ENCODE measurements at regions of chr1 and their contacts with region 1.

Region 1: DNA sequence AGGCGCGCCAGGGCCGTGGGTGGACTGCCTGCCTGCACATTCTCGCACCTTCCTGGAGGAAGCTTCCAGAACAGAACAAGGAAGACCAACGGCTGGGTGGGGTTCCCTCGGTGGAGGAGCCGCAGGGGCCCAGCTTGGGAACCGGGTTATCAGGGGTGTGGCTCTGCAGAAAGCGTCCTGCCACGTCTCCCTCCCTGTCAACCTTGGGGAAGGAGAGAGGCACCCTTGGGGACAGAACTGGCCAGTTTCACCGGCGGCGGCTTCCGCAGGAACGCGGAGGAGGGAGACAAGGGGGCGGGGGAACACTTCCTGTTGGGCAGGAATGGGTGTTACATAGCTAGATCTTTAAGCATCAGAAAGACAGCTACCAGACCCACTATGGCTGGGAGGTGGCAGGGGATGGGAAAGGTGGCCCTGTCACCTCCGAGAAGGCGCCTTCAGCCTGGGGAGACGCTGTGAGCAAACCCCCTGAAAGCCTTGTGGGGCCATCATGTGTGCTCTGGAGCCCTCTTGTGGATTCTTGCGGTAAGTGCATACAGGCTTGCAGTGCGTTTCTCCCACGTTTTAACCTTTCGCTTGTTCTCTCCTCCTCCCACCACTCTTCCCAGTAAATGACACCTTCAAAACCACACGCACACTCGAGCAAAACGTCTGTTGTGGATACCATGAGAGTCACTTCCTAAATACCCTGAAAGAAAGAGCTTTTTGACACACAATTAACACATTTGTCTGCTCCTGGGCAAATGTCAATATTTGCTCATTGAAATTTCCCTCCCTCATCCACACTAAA is 3.8 kb upstream of the PLEKHA6 start:
- DNase-seq: peak; percentile 84 to 88 (median 87)
- ATAC-seq: peak; percentile 88
- H3K4me3 ChIP-seq: peak overlapping the region; percentile 30
- H3K27ac ChIP-seq: peak overlapping the region; percentile 31; the same call in 2 of the 3 replicates
- H3K4me1 ChIP-seq: peaks cover 24 to 34% of the 10 kb centered on the region in 2 experiments
- H3K27me3 ChIP-seq: peaks cover 14 to 44% of the 10 kb centered on the region in 2 experiments
- CTCF ChIP-seq: peak; percentile 96 to 100 (median 98)
- EP300 ChIP-seq: peak; percentile 22; the same call in 1 of the 2 replicates
- POLR2A ChIP-seq: no peak
- RAD21 ChIP-seq: peak; percentile 100

Region 2: DNA sequence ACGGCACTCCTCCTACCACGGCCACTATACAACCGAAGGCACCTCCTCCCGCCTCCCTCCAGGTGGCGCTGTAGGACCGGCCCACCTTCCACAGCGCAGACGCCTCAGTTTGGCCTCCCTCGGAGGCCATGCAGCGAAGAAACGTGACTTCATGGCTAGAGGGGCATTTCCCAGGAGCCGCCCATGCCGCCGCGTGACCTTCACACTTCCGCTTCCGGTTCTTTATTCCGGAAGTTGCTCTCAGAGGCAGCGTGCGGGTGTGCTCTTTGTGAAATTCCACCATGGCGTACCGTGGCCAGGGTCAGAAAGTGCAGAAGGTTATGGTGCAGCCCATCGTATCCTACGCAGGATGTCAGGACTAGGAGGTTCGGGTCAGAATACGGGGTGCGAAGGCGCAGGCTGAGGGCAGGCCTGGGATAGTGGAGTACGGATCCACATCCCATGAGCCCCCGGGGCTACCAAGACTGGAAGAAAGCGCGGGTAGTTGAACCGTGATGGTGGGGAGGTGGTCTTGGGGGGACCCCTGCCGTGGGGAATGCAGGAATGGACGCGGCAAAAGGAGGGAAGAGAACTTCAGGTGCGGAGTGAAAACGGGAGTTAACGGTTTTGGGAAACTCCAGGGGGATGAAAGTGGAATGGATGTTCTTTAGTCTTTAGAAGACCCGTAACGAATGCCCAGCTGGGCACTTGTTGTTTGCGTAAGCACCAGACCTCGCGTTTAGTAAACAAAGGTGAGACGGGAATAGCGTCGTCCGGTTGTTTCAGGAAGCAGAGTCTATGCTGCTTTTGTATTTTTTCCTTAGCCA is 501.9 kb before region 1 on chr1 and contains the start of gene SNRPE:
- CTCF ChIA-PET with region 1: interaction called, 3 read pairs
- POLR2A ChIA-PET with region 1: no interaction called
- in situ Hi-C with region 1: loop called (anchors 10 kb)
- intact Hi-C with region 1: loop called (anchors 5 kb)
- DNase-seq: peak; percentile 96 to 100 (median 97)
- ATAC-seq: peak; percentile 97
- H3K4me3 ChIP-seq: peak within 1 kb of the TSS; percentile 92
- H3K27ac ChIP-seq: peak within 1 kb of the TSS; percentile 95
- H3K4me1 ChIP-seq: peaks cover 4 to 10% of the 10 kb centered on the region in 2 experiments; a peak in 4 of 5 replicates
- H3K27me3 ChIP-seq: no peaks in the 10 kb centered on the region
- CTCF ChIP-seq: peak; percentile 96 to 99 (median 98)
- EP300 ChIP-seq: peak; percentile 59
- POLR2A ChIP-seq: peak; percentile 99
- RAD21 ChIP-seq: peak; percentile 98 to 99
- polyA plus RNA-seq, gene SNRPE: 1,614 to 1,893 TPM

Region 3: GRCh38 chr1:204154568-204155255 is 208.8 kb before region 1 on chr1:
- CTCF ChIA-PET with region 1: no interaction called
- POLR2A ChIA-PET with region 1: no interaction called
- in situ Hi-C with region 1: loop called (anchors 5 kb)
- intact Hi-C with region 1: no loop called
- DNase-seq: no peak
- ATAC-seq: no peak
- H3K4me3 ChIP-seq: no peak overlapping the region
- H3K27ac ChIP-seq: no peak overlapping the region
- H3K4me1 ChIP-seq: peaks cover 0 to 21% of the 10 kb centered on the region in 2 experiments; a peak in 2 of 5 replicates
- H3K27me3 ChIP-seq: peaks cover 13 to 66% of the 10 kb centered on the region in 2 experiments
- CTCF ChIP-seq: no peak
- EP300 ChIP-seq: no peak
- POLR2A ChIP-seq: no peak
- RAD21 ChIP-seq: no peak

Region 4: GRCh38 chr1:204162231-204163074 is 201.1 kb before region 1 on chr1:
- CTCF ChIA-PET with region 1: interaction called, 44 read pairs
- POLR2A ChIA-PET with region 1: interaction called, 8 read pairs
- in situ Hi-C with region 1: loop called (anchors 5 kb)
- intact Hi-C with region 1: loop called (anchors 1 kb)
- DNase-seq: peak; percentile 76 to 94 (median 90)
- ATAC-seq: peak; percentile 98
- H3K4me3 ChIP-seq: no peak overlapping the region
- H3K27ac ChIP-seq: no peak overlapping the region
- H3K4me1 ChIP-seq: no peaks in the 10 kb centered on the region
- H3K27me3 ChIP-seq: peaks cover 3 to 43% of the 10 kb centered on the region in 2 experiments; a peak in 4 of 5 replicates
- CTCF ChIP-seq: peak; percentile 96 to 99 (median 98)
- EP300 ChIP-seq: no peak
- POLR2A ChIP-seq: no peak
- RAD21 ChIP-seq: peak; percentile 99 to 100

Region 5: DNA sequence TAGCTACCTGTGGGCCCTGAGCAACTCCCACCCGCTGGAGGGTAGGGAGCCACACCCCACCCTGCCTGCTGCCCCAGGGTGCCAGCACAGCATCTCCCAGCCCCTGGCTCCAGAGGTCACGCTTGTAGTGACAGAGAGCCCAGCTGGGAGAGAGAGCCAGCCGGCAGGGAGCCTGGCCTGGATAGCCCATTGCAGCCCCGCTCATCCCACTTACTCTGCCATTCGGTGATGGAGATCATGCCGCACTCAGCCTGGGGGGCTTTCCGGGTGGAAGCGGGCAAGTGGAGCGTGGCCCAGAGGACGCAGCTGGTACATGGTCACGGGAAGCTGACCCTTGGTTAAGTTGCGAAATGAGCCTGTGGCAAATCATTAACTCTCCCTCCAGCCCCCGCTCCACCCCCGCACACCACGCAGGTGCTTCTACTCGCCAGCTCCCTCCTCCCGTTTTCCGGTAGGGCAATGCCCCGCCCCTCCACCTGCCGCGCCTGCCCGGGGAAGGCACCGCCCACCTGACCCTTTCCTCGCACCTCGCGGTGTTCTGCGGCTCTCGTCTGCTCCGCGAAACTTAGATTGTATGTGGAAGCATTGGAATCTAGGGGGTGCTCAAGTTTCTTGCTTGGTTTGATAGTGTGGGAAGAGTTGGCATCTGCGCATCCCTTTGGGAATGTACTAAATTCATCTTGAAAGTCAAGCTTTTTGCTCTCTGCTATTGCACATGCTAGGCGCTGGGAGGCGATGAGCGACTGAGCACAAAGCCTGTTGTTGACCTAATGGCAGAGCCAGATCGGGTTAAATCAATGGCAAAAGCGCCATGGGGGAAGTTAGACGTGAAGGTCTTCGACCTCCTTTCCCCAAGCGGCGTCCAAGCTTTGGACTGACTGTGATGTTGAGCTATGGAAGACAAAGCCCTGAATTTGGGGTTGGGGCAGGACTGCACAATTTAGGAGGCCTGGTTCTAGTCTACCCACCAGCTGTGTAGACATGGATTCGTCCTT is 149.6 kb before region 1 on chr1 and contains the start of gene GOLT1A:
- CTCF ChIA-PET with region 1: interaction called, 19 read pairs
- POLR2A ChIA-PET with region 1: interaction called, 4 read pairs
- in situ Hi-C with region 1: loop called (anchors 5 kb)
- intact Hi-C with region 1: loop called (anchors 1 kb)
- DNase-seq: peak; percentile 44 to 71 (median 64)
- ATAC-seq: peak; percentile 90
- H3K4me3 ChIP-seq: no peak within 1 kb of the TSS
- H3K27ac ChIP-seq: no peak within 1 kb of the TSS
- H3K4me1 ChIP-seq: peaks cover 0 to 10% of the 10 kb centered on the region in 2 experiments; a peak in 3 of 5 replicates
- H3K27me3 ChIP-seq: peaks cover 4 to 21% of the 10 kb centered on the region in 2 experiments; a peak in 2 of 5 replicates
- CTCF ChIP-seq: peak; percentile 78 to 90 (median 87)
- EP300 ChIP-seq: no peak
- POLR2A ChIP-seq: no peak
- RAD21 ChIP-seq: peak; percentile 93 to 97
- polyA plus RNA-seq, gene GOLT1A: not detected

Region 6: DNA sequence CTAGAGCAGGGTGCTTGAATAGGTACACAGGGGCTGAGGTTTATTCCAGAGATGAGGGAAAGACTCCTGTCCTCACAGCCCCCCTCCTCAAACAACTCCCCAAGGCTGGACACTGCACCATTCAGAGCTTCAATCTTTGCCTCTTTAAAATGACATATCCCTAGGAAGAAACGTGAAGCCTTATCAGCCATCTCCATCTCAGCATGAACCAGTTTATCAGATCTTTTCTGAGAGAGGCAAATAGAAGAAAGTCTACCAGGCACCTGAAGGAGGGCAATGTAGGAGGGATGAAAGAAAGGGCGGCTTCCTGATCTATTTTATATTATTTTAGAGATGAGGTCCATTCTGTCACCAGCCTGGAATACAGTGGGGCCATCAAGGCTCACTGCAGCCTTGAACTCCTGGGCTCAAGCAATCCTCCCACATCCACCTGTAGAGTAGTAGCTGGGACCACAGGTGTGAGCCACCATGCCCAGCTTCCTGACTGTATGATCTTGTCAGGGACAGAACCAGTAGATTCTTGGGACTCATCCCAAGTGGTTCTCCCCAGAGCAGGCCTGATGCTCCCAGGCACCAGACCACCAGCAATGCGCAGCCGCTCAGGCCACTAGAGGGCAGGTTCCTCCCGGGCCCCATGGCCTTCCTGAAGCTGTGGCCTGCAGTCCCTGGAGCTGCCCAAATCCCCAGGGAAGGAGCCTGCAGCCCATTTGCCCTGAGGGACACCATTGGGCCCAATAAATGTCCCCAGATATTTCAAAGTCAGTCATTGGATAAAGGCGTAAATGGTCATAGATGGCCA is 105.4 kb before region 1 on chr1:
- CTCF ChIA-PET with region 1: interaction called, 22 read pairs
- POLR2A ChIA-PET with region 1: interaction called, 3 read pairs
- in situ Hi-C with region 1: no loop called
- intact Hi-C with region 1: loop called (anchors 1 kb)
- DNase-seq: peak; percentile 66 to 79 (median 74)
- ATAC-seq: peak; percentile 92
- H3K4me3 ChIP-seq: no peak overlapping the region
- H3K27ac ChIP-seq: no peak overlapping the region
- H3K4me1 ChIP-seq: peaks cover 0 to 4% of the 10 kb centered on the region in 2 experiments; a peak in 1 of 5 replicates
- H3K27me3 ChIP-seq: peaks cover 35 to 92% of the 10 kb centered on the region in 2 experiments; a peak in 4 of 5 replicates
- CTCF ChIP-seq: peak; percentile 80 to 88 (median 84)
- EP300 ChIP-seq: no peak
- POLR2A ChIP-seq: no peak
- RAD21 ChIP-seq: peak; percentile 92

Region 7: GRCh38 chr1:204304067-204304466 is 59.5 kb before region 1 on chr1:
- CTCF ChIA-PET with region 1: interaction called, 3 read pairs
- POLR2A ChIA-PET with region 1: no interaction called
- in situ Hi-C with region 1: no loop called
- intact Hi-C with region 1: loop called (anchors 2 kb)
- DNase-seq: no peak
- ATAC-seq: no peak
- H3K4me3 ChIP-seq: no peak overlapping the region
- H3K27ac ChIP-seq: no peak overlapping the region
- H3K4me1 ChIP-seq: no peaks in the 10 kb centered on the region
- H3K27me3 ChIP-seq: peaks cover 28 to 45% of the 10 kb centered on the region in 2 experiments
- CTCF ChIP-seq: no peak
- EP300 ChIP-seq: no peak
- POLR2A ChIP-seq: no peak
- RAD21 ChIP-seq: no peak

Region 8: DNA sequence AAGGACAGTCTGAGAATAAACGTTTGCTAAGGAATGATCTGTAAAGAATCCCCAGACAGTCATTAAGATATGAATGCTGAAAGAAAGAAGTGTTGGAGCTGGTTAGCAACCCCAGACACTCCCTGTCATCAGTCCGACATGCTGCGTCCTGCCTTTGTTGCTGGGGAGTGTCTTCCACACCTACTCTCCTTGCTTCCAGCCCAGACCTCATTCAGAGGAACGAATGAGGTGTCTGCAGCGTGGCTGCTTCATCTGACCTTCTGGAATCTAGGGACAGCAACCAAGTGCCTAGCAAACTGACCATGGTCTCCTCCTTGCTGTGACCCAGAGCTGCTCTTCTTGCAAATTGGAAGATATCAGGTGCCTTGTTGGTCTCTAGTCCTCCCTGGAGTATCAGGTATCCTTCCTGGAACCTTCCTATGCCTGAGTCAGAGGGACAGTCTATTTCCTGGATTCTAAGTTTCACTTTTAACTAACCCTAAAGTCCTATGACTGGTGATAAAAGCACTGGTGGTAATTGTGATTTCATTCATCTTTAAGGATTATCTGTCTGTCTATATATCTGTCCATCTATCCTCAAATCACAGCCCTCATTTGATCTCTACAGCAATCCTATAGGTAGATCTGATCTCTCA is 552.4 kb after region 1 on chr1:
- CTCF ChIA-PET with region 1: no interaction called
- POLR2A ChIA-PET with region 1: no interaction called
- in situ Hi-C with region 1: no loop called
- intact Hi-C with region 1: no loop called
- DNase-seq: no peak
- ATAC-seq: no peak
- H3K4me3 ChIP-seq: no peak overlapping the region
- H3K27ac ChIP-seq: no peak overlapping the region
- H3K4me1 ChIP-seq: no peaks in the 10 kb centered on the region
- H3K27me3 ChIP-seq: peaks cover 2 to 9% of the 10 kb centered on the region in 2 experiments; a peak in 4 of 5 replicates
- CTCF ChIP-seq: no peak
- EP300 ChIP-seq: no peak
- POLR2A ChIP-seq: no peak
- RAD21 ChIP-seq: no peak

Measured in K562 (cell line).